ENCODE measurements at regions of chr9 and their contacts with region 1.

Region 1: DNA sequence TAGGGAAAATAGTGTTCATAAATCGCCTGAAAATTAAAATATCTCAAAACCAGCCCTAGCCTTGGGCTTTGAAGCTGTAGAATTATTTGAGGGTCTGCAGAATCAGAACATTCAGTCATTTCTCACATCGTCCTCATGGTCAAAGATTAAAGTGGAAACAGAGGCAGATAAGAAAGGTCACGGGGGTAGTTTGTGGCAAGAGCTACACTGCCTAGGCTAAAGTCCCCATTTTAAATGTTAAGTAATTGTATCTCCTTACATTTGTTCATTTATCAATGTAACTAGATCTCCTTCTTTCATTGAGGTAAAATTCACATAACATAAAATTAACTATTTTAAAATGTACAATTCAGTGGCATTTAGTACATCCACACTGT is 139.2 kb downstream of the TLE1 start:
- H3K4me3 ChIP-seq: no peak overlapping the region
- H3K27ac ChIP-seq: no peak overlapping the region; the same call in 1 of the 2 replicates
- H3K4me1 ChIP-seq: peaks cover 20% of the 10 kb centered on the region
- CTCF ChIP-seq: no peak

Region 2: DNA sequence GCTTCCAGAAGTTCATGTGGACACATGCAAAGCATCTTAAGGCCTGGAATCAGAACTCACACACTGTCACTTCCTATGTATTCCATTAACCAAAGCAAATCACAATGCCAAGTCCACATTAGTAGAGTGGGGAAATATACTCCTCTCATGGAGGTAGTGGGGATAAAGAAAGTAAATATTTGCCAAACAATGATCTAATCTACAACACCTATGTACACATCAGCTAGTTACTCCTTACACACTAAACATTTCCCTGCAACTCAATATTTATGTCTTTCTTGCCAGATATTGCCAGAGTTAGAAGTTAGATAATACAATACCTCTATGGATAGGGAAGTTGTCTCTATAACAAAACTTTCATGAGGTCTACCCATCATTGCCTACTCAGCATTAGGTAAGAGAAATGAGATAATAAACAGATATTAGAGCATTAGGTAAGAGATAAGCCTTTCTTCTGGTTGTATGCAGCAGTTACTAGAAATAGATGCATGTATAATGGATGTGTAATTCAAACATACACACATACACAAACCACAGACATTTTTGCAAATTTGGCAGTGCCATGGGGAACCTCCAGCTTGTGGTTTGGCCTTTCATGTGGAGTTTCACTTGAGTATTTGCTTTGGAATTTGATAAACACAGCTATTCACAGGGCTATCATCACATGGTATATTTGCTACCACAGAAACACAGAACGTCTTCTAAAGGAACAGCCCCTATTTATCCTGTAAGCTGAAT is 57.3 kb before region 1 on chr9:
- CTCF ChIA-PET with region 1: no interaction called
- POLR2A ChIA-PET with region 1: no interaction called
- H3K4me3 ChIP-seq: no peak overlapping the region
- H3K27ac ChIP-seq: no peak overlapping the region
- H3K4me1 ChIP-seq: 0 out of 2 replicates have a peak, but pooled peaks cover 4% of the 10 kb centered on the region
- CTCF ChIP-seq: no peak

Region 3: DNA sequence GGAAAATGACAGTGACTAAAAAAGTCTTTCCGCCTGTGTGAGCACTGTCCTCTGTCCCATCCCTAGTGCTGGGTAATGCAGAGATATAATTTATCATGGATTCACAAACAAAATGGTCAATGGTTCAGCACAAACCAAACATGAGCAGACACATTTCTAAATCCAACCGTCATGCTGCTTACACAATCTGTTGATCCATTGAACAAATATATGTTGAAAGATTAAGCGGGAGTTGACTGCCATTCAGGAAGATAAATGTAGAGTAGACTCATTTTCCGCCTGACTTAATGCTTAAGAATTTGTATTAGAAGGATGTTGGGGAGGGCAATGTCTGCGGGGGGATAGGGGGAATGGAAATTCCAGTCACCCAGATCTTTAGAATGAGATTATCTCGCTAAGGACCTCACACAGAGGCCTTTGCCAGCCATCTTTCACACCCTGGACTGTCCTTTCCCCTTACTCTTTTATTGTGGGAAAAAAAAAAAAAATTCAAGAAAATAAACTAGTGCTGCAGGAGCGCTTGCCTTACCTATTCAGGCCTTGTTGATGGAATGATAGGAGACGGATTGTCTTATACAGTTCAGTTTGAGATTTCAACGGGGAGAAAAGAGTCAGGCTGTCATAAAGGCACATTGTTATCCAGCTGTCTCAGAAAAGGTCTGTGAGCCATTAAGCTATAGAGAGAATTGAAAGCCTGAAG is 14.5 kb before region 1 on chr9:
- CTCF ChIA-PET with region 1: interaction called, 10 read pairs
- POLR2A ChIA-PET with region 1: no interaction called
- H3K4me3 ChIP-seq: no peak overlapping the region
- H3K27ac ChIP-seq: no peak overlapping the region
- H3K4me1 ChIP-seq: no peaks in the 10 kb centered on the region; the same call in 1 of the 2 replicates
- CTCF ChIP-seq: no peak

Region 4: DNA sequence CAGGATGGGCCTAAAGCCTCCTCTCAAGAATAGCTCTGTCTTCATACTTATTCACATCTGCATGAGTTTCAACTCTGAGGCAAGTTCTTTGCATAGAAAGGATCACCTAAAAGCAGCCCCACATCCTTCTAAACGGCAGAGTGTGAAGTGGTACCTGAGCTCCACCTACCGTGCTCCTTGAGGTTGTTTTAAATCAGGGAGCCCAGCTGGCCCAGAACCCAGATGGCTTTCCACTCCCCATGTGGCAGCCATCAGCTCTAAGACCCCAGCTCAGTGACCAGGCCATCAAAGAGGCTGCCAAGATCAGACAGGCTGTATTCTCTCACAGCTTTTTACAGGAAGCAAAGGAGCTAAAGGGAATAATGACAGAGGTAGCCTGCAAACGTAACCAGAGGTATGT is 1213.5 kb after region 1 on chr9:
- CTCF ChIA-PET with region 1: no interaction called
- POLR2A ChIA-PET with region 1: no interaction called
- H3K4me3 ChIP-seq: no peak overlapping the region
- H3K27ac ChIP-seq: no peak overlapping the region
- H3K4me1 ChIP-seq: no peaks in the 10 kb centered on the region
- CTCF ChIP-seq: no peak